ENCODE measurements at regions of chr15 and their contacts with region 1.

Region 1: GRCh38 chr15:90954712-90955671 is at the start of gene RCCD1:
- DNase-seq: peak; percentile 98 to 100
- ATAC-seq: peak; percentile 84 to 94
- H3K4me3 ChIP-seq: peak within 1 kb of the TSS; percentile 83
- H3K27ac ChIP-seq: peak within 1 kb of the TSS; percentile 95 to 98
- H3K4me1 ChIP-seq: peaks cover 19% of the 10 kb centered on the region
- CTCF ChIP-seq: no peak
- EP300 ChIP-seq: no peak
- POLR2A ChIP-seq: peak; percentile 88
- RAD21 ChIP-seq: no peak
- polyA plus RNA-seq, gene RCCD1: 22.8 and 25.3 TPM in 2 replicates

Region 2: DNA sequence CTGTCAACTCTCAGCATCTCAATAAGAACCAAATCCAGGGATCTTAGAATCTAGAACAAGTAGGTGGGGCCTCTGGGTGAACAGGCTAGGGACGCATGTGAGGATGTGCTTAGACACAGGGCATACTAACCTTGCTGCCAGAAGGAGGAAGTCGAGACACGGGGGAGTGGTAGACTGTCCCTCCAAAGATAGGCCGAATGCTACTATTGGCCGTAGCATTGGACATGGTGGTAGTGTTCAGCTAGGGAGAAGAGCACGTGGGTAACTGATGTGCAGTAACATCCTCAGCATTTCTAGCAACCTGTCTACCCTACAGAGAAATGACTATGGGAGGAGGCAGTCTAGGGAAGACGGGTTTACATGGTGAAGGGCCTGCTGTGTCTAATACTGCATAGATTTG is 15.3 kb after region 1 on chr15:
- CTCF ChIA-PET with region 1: interaction called, 247 read pairs
- POLR2A ChIA-PET with region 1: interaction called, 3 read pairs
- DNase-seq: no peak
- ATAC-seq: no peak
- H3K4me3 ChIP-seq: no peak overlapping the region
- H3K27ac ChIP-seq: no peak overlapping the region
- H3K4me1 ChIP-seq: no peaks in the 10 kb centered on the region
- CTCF ChIP-seq: no peak
- EP300 ChIP-seq: no peak
- POLR2A ChIP-seq: no peak
- RAD21 ChIP-seq: no peak

Region 3: DNA sequence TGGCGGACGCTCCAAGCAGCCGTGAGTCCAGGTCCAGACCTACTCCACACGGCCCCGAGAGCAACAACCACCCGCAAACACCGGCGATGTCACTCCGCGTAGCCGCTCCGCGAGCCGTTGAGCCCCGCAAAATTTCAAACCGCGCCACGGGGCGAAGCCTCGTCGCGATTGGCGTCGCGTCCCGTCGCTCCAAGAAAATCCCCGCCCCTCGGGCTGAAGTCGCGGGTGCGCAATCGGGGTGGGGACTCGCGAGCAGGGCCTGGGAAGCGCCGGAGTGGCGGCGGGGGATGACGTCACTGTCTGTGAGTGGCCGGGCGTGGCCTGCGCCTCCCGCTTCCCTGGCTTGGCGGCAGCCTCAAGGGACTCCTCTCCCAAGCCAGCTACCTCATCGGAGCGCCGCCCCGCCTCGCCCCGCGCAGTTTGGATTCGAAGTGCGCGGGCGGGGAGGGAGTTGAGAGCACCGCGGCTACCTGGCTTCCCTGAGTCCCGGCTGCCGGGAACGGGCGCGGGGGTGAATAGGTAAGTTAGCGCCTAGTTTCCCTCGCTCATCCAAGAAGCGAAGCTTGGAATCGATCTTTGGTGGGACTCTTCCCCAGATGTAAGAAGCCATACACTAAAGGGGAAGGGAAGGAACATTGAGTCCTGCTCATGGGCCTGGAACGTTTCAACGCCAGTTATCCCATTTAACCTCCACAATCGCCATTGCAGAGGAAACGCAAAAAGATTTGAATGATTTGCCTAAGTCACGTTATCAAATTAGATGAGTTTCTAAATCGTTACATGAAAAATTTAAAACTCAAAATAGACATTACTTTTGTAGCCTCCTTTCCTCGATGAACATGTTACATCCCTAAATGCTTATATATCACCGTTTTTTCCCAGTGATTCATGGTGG is 39.7 kb after region 1 on chr15 and contains the start of gene PRC1:
- CTCF ChIA-PET with region 1: interaction called, 247 read pairs
- POLR2A ChIA-PET with region 1: interaction called, 5 read pairs
- DNase-seq: peak; percentile 99
- ATAC-seq: peak; percentile 95 to 97
- H3K4me3 ChIP-seq: peak within 1 kb of the TSS; percentile 95
- H3K27ac ChIP-seq: peak within 1 kb of the TSS; percentile 94 to 95
- H3K4me1 ChIP-seq: peaks cover 11% of the 10 kb centered on the region
- CTCF ChIP-seq: no peak
- EP300 ChIP-seq: no peak
- POLR2A ChIP-seq: peak; percentile 74
- RAD21 ChIP-seq: no peak
- polyA plus RNA-seq, gene PRC1: 376 and 426 TPM in 2 replicates

Region 4: GRCh38 chr15:91022075-91022835 is 67.3 kb after region 1 on chr15 and contains the start of gene VPS33B:
- CTCF ChIA-PET with region 1: interaction called, 16 read pairs
- POLR2A ChIA-PET with region 1: no interaction called
- DNase-seq: peak; percentile 86 to 91
- ATAC-seq: peak; percentile 94 to 96
- H3K4me3 ChIP-seq: peak within 1 kb of the TSS; percentile 89
- H3K27ac ChIP-seq: peak within 1 kb of the TSS; percentile 88 to 91
- H3K4me1 ChIP-seq: peaks cover 16% of the 10 kb centered on the region
- CTCF ChIP-seq: no peak
- EP300 ChIP-seq: no peak
- POLR2A ChIP-seq: peak; percentile 84
- RAD21 ChIP-seq: no peak
- polyA plus RNA-seq, gene VPS33B: 17.9 and 25.0 TPM in 2 replicates

Region 5: GRCh38 chr15:91032919-91033803 is 78.2 kb after region 1 on chr15:
- CTCF ChIA-PET with region 1: interaction called, 71 read pairs
- POLR2A ChIA-PET with region 1: no interaction called
- DNase-seq: peak in 1 of 2 experiments; percentile 73
- ATAC-seq: peak; percentile 76 to 88; a peak in 5 of 6 replicates
- H3K4me3 ChIP-seq: no peak overlapping the region
- H3K27ac ChIP-seq: no peak overlapping the region
- H3K4me1 ChIP-seq: no peaks in the 10 kb centered on the region
- CTCF ChIP-seq: peak; percentile 62
- EP300 ChIP-seq: no peak
- POLR2A ChIP-seq: no peak
- RAD21 ChIP-seq: peak; percentile 52 to 60

Region 6: GRCh38 chr15:91049378-91050127 is 94.6 kb after region 1 on chr15:
- CTCF ChIA-PET with region 1: interaction called, 203 read pairs
- POLR2A ChIA-PET with region 1: interaction called, 4 read pairs
- DNase-seq: peak; percentile 63 to 81
- ATAC-seq: peak; percentile 95 to 96
- H3K4me3 ChIP-seq: no peak overlapping the region
- H3K27ac ChIP-seq: no peak overlapping the region
- H3K4me1 ChIP-seq: no peaks in the 10 kb centered on the region
- CTCF ChIP-seq: peak; percentile 83
- EP300 ChIP-seq: no peak
- POLR2A ChIP-seq: no peak
- RAD21 ChIP-seq: peak; percentile 83 to 86

Measured in A549 (cell line).